Activated T-helper 1 cell treated with anti-CD3 and anti-CD28 coated beads, Interleukin-12 subunit alpha, Interleukin-12 subunit beta, Interleukin-2, Interleukin-4 antibody, amounts not matched to agents 30 ng/mL and 10 ng/mL and 1 ng/mL, durations not matched to agents 14 hours and 24 hours and 36 hours (primary cell): ENCODE measurements at regions of chr11 and their contacts with region 1.

Region 1: GRCh38 chr11:77127232-77127911 is 674 bp upstream of the MYO7A start:
- DNase-seq: peak; percentile 28
- H3K4me3 Mint-ChIP-seq: peak overlapping the region; percentile 61
- H3K27ac Mint-ChIP-seq: no peak overlapping the region
- H3K4me1 Mint-ChIP-seq: peaks cover 5% of the 10 kb centered on the region
- H3K27me3 Mint-ChIP-seq: peaks cover 4% of the 10 kb centered on the region

Region 2: GRCh38 chr11:76471378-76471777 is 656.0 kb before region 1 on chr11:
- intact Hi-C with region 1: no loop called
- DNase-seq: no peak
- H3K4me3 Mint-ChIP-seq: no peak overlapping the region
- H3K27ac Mint-ChIP-seq: no peak overlapping the region
- H3K4me1 Mint-ChIP-seq: no peaks in the 10 kb centered on the region
- H3K27me3 Mint-ChIP-seq: no peaks in the 10 kb centered on the region

Region 3: DNA sequence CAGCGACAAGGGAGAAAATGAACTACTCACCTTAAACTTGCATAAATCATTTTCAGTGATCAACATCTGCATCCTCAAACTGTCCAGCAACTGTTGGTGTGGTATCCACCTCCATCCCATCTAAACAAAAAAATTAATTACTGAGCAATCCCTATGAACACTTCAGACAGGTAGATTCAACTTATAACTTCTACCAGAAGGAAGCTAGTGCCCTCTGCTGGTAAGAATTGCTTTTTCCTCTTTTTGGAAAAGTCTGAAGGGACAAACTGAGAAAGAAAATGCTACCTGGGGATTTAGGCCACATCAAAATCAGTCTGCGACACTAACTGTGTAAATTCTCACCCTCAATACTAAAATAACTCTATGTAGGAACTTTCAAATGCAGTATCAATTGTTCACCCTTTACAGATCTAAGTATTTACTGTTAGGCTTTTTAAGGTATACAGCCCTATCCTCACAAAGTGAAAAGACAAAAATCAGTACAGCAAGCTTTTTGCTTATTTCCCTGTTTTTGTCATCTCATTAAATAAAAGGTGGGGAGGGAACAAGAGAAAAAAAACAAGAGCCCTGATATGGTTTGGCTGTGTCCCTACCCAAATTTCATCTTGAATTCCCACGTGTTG is 492.3 kb after region 1 on chr11:
- intact Hi-C with region 1: loop called (anchors 1 kb)
- DNase-seq: peak; percentile 5
- H3K4me3 Mint-ChIP-seq: no peak overlapping the region
- H3K27ac Mint-ChIP-seq: no peak overlapping the region
- H3K4me1 Mint-ChIP-seq: no peaks in the 10 kb centered on the region
- H3K27me3 Mint-ChIP-seq: no peaks in the 10 kb centered on the region